ENCODE measurements at regions of chrX and their contacts with region 1.

Region 1: DNA sequence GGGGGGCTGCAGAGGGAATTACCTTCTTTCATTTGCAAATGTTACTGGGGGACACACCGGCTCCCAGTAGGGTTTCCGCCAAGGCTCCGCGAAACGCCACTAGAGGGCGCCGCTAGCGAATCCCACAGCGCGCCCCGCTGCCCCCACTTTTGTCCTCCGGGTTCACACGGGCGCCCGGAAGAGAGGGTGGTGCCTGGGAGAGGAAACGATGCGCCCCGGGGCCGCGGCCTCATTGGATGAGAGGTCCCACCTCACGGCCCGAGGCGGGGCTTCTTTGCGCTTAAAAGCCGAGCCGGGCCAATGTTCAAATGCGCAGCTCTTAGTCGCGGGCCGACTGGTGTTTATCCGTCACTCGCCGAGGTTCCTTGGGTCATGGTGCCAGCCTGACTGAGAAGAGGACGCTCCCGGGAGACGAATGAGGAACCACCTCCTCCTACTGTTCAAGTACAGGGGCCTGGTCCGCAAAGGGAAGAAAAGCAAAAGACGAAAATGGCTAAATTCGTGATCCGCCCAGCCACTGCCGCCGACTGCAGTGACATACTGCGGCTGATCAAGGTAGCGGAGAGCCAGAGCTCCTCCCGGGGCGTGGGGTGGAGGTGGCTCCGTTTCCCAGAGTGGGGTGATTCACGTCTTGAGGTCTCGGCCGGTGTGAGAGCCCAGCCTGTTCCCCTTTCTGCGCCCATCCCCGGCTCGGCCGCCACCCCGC is at the start of gene SAT1:
- DNase-seq: peak; percentile 92 to 96 (median 94)
- H3K4me3 ChIP-seq: peak within 1 kb of the TSS; percentile 45 to 87 (median 71)
- H3K27ac ChIP-seq: peak within 1 kb of the TSS in 58 of 59 donors; percentile 41 to 95 (median 87)
- H3K27me3 ChIP-seq: peaks cover 0 to 10% (median 0%) of the 10 kb centered on the region in 45 donors
- CTCF ChIP-seq: peak; percentile 62 to 92 (median 81)
- total RNA-seq, gene SAT1: 115 to 388 (median 167) TPM

Region 2: GRCh38 chrX:23694606-23695005 is 88.4 kb before region 1 on chrX:
- intact Hi-C with region 1: loop called in 1 of 2 experiments (anchors 10 kb)
- DNase-seq: peak in 9 of 10 donors; percentile 30 to 68 (median 52)
- H3K4me3 ChIP-seq: no peak overlapping the region
- H3K27ac ChIP-seq: no peak overlapping the region
- H3K27me3 ChIP-seq: peaks cover 0 to 64% (median 7%) of the 10 kb centered on the region in 45 donors
- CTCF ChIP-seq: peak in 51 of 56 donors; percentile 13 to 71 (median 47)

Region 3: GRCh38 chrX:23726191-23726590 is 56.8 kb before region 1 on chrX:
- intact Hi-C with region 1: no loop called
- DNase-seq: no peak
- H3K4me3 ChIP-seq: no peak overlapping the region
- H3K27ac ChIP-seq: no peak overlapping the region
- H3K27me3 ChIP-seq: peaks cover 0 to 43% (median 0%) of the 10 kb centered on the region in 45 donors
- CTCF ChIP-seq: no peak

Region 4: GRCh38 chrX:23817172-23817601 is 34.2 kb after region 1 on chrX:
- intact Hi-C with region 1: loop called in 1 of 2 experiments (anchors 5 kb)
- DNase-seq: no peak
- H3K4me3 ChIP-seq: no peak overlapping the region
- H3K27ac ChIP-seq: no peak overlapping the region
- H3K27me3 ChIP-seq: peaks cover 0 to 53% (median 12%) of the 10 kb centered on the region in 45 donors
- CTCF ChIP-seq: no peak

Region 5: GRCh38 chrX:23901805-23902204 is 118.8 kb after region 1 on chrX:
- intact Hi-C with region 1: loop called (anchors 1 to 2 kb)
- DNase-seq: peak in 1 of 10 donors; percentile 38
- H3K4me3 ChIP-seq: peak overlapping the region in 30 of 59 donors; percentile 1 to 50 (median 28)
- H3K27ac ChIP-seq: peak overlapping the region in 47 of 59 donors; percentile 1 to 79 (median 55)
- H3K27me3 ChIP-seq: peaks cover 0 to 38% (median under 1%) of the 10 kb centered on the region in 45 donors
- CTCF ChIP-seq: peak in 52 of 56 donors; percentile 22 to 67 (median 47)

Measured in dorsolateral prefrontal cortex (tissue), 120 donors.